ENCODE measurements at regions of chr6 and their contacts with region 1.

Region 1: DNA sequence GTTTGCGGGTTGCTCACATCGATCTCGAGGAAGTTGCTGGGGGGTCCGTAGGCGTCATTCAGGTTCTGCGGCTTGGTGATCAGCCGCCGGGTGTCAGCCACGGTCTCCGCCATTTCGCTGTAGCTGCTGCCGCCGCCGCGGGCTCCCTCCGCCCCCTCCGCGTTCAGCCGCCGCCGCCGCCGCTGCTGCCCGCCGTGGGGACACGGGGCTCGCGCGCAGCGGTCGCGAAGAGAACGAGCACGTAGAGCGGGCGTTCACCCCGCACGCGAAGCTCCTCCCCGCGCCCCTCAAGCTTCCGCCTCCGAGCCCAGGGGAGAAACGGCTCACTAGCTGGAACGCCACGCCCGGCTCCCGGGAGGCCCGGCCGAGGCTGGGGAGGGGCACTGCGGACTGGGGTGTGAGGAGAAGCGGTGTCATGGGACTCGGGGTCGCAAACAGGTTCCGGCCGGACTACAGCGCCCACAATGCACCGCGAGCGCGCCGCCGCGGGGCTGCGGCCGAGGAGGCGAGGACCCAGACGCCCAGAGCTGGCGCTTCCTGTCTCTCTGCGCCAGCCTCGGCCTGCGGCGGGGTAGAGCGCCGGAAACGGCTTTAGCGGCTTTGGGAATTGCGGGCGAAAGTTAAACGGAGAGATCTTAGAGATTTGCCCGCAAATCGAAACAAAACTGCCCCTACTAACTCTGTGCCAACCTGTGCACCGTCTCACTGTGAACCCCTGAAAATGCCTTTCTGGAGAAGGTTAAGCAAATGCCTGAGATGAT is at the start of gene SNX3:
- DNase-seq: peak; percentile 98
- H3K4me3 ChIP-seq: peak within 1 kb of the TSS; percentile 87
- H3K4me3 Mint-ChIP-seq: peak within 1 kb of the TSS; percentile 92
- H3K27ac Mint-ChIP-seq: peak within 1 kb of the TSS; percentile 87
- H3K4me1 ChIP-seq: peaks cover 8% of the 10 kb centered on the region; the same call in 1 of the 2 replicates
- H3K4me1 Mint-ChIP-seq: no peaks in the 10 kb centered on the region
- H3K27me3 ChIP-seq: no peaks in the 10 kb centered on the region
- H3K27me3 Mint-ChIP-seq: no peaks in the 10 kb centered on the region
- CTCF ChIP-seq: no peak
- total RNA-seq, gene SNX3: 111 and 114 TPM in 2 replicates

Region 2: DNA sequence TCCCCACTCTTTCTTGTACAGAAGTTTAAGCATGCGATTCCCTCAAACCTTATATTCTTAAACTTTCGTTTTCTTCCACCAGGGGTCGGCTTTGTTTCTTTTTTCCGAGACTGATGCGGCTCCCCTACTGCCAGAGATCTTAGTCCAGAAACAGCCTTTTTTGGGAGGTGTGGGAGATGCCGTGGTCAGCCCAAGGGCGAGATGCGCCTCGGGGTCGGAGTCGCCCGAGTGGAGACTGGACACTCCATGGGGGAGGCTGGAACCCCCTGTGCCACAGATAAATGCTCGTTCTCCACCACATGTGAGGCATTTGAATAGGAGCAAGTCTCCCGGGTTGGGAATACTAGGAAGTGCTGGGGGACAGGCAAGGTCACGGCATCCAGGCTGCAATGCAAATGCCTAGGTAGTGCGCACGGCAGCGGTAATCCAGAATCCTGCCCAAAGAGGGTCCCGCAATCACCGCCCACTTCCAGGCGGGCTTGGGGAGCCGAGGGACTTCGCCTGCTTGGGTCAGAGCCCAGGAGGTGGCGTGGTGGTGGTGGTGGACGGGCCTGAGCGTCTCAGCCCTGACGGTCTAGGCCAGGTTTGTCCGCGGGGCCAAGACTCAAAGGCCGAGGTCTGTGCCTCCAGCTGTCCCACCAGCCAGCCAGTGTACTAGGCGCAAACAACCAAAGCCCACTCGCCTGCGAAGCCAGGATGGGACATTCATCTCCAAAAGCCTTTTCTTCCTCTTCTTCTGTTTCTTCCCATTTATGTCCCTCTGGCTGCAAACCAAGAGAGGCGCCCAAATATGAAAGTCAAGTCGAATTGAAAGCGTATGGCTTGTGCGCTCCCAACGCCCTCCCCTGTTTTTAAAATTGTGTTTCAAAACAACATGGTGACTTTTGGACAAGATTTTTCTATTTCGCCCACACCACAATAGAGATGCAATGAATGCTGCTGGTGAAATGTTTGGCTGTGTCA is 147.2 kb before region 1 on chr6:
- CTCF ChIA-PET with region 1: no interaction called
- POLR2A ChIA-PET with region 1: interaction called, 3 read pairs
- intact Hi-C with region 1: loop called (anchors 5 kb)
- DNase-seq: peak in 1 of 2 experiments; percentile 67
- H3K4me3 ChIP-seq: no peak overlapping the region
- H3K4me3 Mint-ChIP-seq: no peak overlapping the region
- H3K27ac Mint-ChIP-seq: no peak overlapping the region
- H3K4me1 ChIP-seq: no peaks in the 10 kb centered on the region
- H3K4me1 Mint-ChIP-seq: peaks cover 7% of the 10 kb centered on the region
- H3K27me3 ChIP-seq: no peaks in the 10 kb centered on the region
- H3K27me3 Mint-ChIP-seq: no peaks in the 10 kb centered on the region
- CTCF ChIP-seq: peak; percentile 49 to 60

Region 3: GRCh38 chr6:108294727-108295625 is 34.0 kb after region 1 on chr6 and contains the start of gene AFG1L:
- CTCF ChIA-PET with region 1: interaction called, 3 read pairs
- POLR2A ChIA-PET with region 1: interaction called, 7 read pairs
- intact Hi-C with region 1: loop called (anchors 1 kb)
- DNase-seq: peak; percentile 93 to 95
- H3K4me3 ChIP-seq: peak within 1 kb of the TSS; percentile 73
- H3K4me3 Mint-ChIP-seq: peak within 1 kb of the TSS; percentile 99
- H3K27ac Mint-ChIP-seq: peak within 1 kb of the TSS; percentile 99
- H3K4me1 ChIP-seq: no peaks in the 10 kb centered on the region; the same call in 1 of the 2 replicates
- H3K4me1 Mint-ChIP-seq: no peaks in the 10 kb centered on the region
- H3K27me3 ChIP-seq: no peaks in the 10 kb centered on the region
- H3K27me3 Mint-ChIP-seq: no peaks in the 10 kb centered on the region
- CTCF ChIP-seq: no peak
- total RNA-seq, gene AFG1L: 7.2 and 10.2 TPM in 2 replicates

Region 4: DNA sequence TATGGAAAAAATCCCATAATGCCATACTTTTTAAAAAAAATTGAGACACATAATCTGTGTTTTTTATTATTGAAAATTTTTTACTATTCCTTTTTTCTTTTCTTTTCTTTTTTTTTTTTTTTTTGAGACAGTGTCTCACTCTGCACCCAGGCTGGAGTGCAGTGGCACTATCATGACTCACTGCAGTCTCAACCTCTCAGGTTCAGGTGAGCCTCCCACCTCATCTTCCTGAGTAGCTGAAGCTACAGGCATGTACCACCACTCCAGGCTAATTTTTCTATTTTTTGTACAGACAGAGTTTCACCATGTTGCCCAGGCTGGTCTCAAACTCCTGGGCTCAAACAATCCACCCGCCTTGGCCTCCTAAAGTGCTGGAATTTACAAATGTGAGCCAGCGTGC is 134.3 kb after region 1 on chr6:
- CTCF ChIA-PET with region 1: no interaction called
- POLR2A ChIA-PET with region 1: no interaction called
- intact Hi-C with region 1: no loop called
- DNase-seq: no peak
- H3K4me3 ChIP-seq: no peak overlapping the region
- H3K4me3 Mint-ChIP-seq: no peak overlapping the region
- H3K27ac Mint-ChIP-seq: no peak overlapping the region
- H3K4me1 ChIP-seq: no peaks in the 10 kb centered on the region
- H3K4me1 Mint-ChIP-seq: no peaks in the 10 kb centered on the region
- H3K27me3 ChIP-seq: no peaks in the 10 kb centered on the region
- H3K27me3 Mint-ChIP-seq: no peaks in the 10 kb centered on the region
- CTCF ChIP-seq: no peak

Region 5: DNA sequence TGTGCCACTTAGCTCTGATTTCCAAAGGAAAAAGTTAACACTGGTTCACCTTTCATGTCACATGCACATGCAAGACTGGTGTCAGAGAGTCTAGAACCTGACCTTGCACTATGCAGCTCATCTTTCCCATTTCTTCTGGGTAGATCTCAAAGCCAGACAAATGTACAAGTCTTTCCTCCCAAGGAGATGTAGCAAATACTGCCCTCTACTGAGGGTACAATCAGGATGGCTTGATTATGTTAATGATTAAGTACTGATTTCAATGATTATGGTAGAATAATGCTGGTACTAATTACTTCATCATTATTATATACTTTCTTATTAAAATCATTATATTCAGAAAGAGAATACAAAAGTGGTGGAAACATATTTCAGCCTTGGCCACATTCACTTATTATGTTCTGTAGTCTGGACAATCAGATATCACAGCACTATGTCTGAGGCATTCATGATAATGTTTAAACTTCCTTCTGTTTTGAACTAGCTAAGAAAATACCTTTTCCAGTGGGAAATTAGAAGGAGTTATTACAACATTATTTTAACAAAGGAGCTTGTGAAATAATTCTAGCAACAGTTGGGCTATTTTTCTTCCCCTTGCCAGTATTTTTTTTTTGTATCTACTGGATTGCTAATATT is 231.3 kb after region 1 on chr6:
- CTCF ChIA-PET with region 1: interaction called, 11 read pairs
- POLR2A ChIA-PET with region 1: no interaction called
- intact Hi-C with region 1: loop called (anchors 2 kb)
- DNase-seq: peak in 1 of 2 experiments; percentile 35
- H3K4me3 ChIP-seq: no peak overlapping the region
- H3K4me3 Mint-ChIP-seq: no peak overlapping the region
- H3K27ac Mint-ChIP-seq: no peak overlapping the region
- H3K4me1 ChIP-seq: no peaks in the 10 kb centered on the region
- H3K4me1 Mint-ChIP-seq: no peaks in the 10 kb centered on the region
- H3K27me3 ChIP-seq: no peaks in the 10 kb centered on the region
- H3K27me3 Mint-ChIP-seq: no peaks in the 10 kb centered on the region
- CTCF ChIP-seq: peak in 1 of 2 experiments; percentile 67